HepG2 (cell line): ENCODE measurements at regions of chr5 and their contacts with region 1.

Region 1: GRCh38 chr5:217860-218456 is at the starts of genes CCDC127 and SDHA:
- DNase-seq: peak; percentile 87
- ATAC-seq: peak; percentile 85
- H3K4me3 ChIP-seq: peak within 1 kb of the TSS; percentile 81 to 99 (median 93)
- H3K27ac ChIP-seq: peak within 1 kb of the TSS; percentile 81
- H3K4me1 ChIP-seq: peaks cover 29% of the 10 kb centered on the region
- H3K27me3 ChIP-seq: no peaks in the 10 kb centered on the region
- CTCF ChIP-seq: peak; percentile 69
- EP300 ChIP-seq: no peak
- POLR2A ChIP-seq: peak; percentile 58 to 84; a peak in 3 of 4 replicates
- RAD21 ChIP-seq: peak; percentile 44; the same call in 1 of the 2 replicates
- total RNA-seq, gene CCDC127: 2.8 and 4.3 TPM in 2 replicates
- total RNA-seq, gene SDHA: 192 and 240 TPM in 2 replicates

Region 2: GRCh38 chr5:129820-130219 is 88.1 kb before region 1 on chr5:
- CTCF ChIA-PET with region 1: no interaction called
- POLR2A ChIA-PET with region 1: no interaction called
- in situ Hi-C with region 1: no loop called
- intact Hi-C with region 1: no loop called
- DNase-seq: no peak
- ATAC-seq: no peak
- H3K4me3 ChIP-seq: no peak overlapping the region
- H3K27ac ChIP-seq: no peak overlapping the region
- H3K4me1 ChIP-seq: no peaks in the 10 kb centered on the region
- H3K27me3 ChIP-seq: no peaks in the 10 kb centered on the region; a peak in 1 of 5 replicates
- CTCF ChIP-seq: no peak
- EP300 ChIP-seq: no peak
- POLR2A ChIP-seq: no peak
- RAD21 ChIP-seq: no peak

Region 3: DNA sequence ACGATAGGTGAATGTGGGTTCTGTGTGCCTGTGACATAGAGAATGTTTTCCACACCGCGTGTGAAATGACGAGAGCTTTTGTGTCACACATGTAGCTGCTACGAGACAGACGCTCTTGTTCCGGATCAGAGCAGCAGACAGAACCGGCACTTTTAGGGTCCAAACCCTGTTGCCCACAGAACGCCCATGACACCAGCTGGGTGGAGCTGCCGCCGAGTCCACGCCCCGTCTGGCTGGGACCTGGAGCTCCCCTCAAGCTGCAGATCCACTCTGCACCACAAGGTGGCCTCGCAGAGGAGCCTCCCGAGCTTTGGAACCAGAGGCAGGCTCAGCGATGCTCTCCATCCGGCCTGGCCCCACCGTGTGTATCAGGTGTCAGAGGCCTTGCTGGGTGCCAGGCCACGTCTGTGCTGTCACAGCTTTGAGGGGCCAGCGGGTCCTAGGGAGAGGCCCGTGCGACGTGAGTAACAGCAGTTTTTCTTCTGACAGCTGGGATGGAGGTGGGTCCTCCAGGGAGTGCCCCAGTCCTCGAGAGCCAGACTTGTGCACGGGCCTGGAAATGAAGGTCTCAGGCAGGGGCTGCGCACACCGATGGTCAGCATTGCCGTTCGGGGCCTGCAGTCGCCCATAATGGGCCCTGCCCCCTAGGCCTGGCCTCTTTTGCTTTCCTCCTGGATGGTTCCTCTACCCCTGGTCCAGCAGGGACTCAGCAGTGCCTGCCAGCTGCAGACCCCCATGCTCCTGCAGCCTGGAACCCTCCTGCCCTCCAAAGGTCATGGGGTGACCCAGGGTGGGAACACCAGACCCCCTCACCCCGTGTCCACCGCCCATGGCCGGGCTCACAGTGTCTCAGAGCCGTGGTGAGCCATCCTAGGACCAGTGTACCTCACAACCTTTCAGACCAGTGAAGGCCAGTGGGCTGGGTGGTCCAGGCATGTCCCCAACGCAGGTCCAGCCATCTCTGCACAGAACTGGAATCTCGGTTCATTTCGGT is 29.2 kb before region 1 on chr5:
- CTCF ChIA-PET with region 1: interaction called, 3 read pairs
- POLR2A ChIA-PET with region 1: no interaction called
- in situ Hi-C with region 1: no loop called
- intact Hi-C with region 1: loop called (anchors 2 kb)
- DNase-seq: peak; percentile 77
- ATAC-seq: peak; percentile 93
- H3K4me3 ChIP-seq: no peak overlapping the region; a peak in 1 of 6 replicates
- H3K27ac ChIP-seq: no peak overlapping the region
- H3K4me1 ChIP-seq: peaks cover 23% of the 10 kb centered on the region
- H3K27me3 ChIP-seq: peaks cover 0 to 15% of the 10 kb centered on the region in 2 experiments; a peak in 1 of 5 replicates
- CTCF ChIP-seq: peak; percentile 97
- EP300 ChIP-seq: no peak
- POLR2A ChIP-seq: no peak
- RAD21 ChIP-seq: peak; percentile 85

Region 4: GRCh38 chr5:231661-232060 is 13.7 kb after region 1 on chr5:
- CTCF ChIA-PET with region 1: no interaction called
- POLR2A ChIA-PET with region 1: no interaction called
- in situ Hi-C with region 1: no loop called
- intact Hi-C with region 1: no loop called
- DNase-seq: no peak
- ATAC-seq: no peak
- H3K4me3 ChIP-seq: no peak overlapping the region
- H3K27ac ChIP-seq: no peak overlapping the region
- H3K4me1 ChIP-seq: no peaks in the 10 kb centered on the region
- H3K27me3 ChIP-seq: no peaks in the 10 kb centered on the region
- CTCF ChIP-seq: no peak
- EP300 ChIP-seq: no peak
- POLR2A ChIP-seq: no peak
- RAD21 ChIP-seq: no peak

Region 5: DNA sequence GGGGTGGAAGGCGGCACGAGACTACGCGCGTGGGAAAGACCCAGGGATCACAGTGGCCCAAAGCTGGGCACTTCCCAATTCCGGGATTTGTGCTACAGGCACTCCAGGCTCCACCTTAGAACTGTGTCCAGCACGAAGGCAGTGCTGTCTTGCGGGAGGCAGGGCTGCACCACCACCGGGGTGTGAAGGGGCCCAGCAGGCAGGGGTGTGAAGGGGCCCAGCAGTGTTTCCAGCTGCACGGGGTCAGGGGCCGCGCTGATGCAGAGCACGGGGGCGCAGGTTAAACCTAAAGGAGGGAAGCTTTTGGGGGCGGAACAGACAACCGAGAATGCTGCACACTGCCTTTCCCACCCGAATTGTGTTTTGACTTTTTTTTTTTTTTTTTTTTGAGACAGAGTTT is 52.4 kb after region 1 on chr5:
- CTCF ChIA-PET with region 1: no interaction called
- POLR2A ChIA-PET with region 1: interaction called, 15 read pairs
- in situ Hi-C with region 1: no loop called
- intact Hi-C with region 1: loop called (anchors 5 kb)
- DNase-seq: no peak
- ATAC-seq: no peak
- H3K4me3 ChIP-seq: peak overlapping the region in 1 of 3 experiments; percentile 71; a peak in 1 of 6 replicates
- H3K27ac ChIP-seq: peak overlapping the region; percentile 66
- H3K4me1 ChIP-seq: peaks cover 23% of the 10 kb centered on the region
- H3K27me3 ChIP-seq: no peaks in the 10 kb centered on the region
- CTCF ChIP-seq: no peak
- EP300 ChIP-seq: no peak
- POLR2A ChIP-seq: no peak
- RAD21 ChIP-seq: no peak

Region 6: GRCh38 chr5:442335-443238 is 224.6 kb after region 1 on chr5 and contains the start of gene EXOC3:
- CTCF ChIA-PET with region 1: no interaction called
- POLR2A ChIA-PET with region 1: no interaction called
- in situ Hi-C with region 1: no loop called
- intact Hi-C with region 1: loop called (anchors 5 kb)
- DNase-seq: peak; percentile 52
- ATAC-seq: peak; percentile 92
- H3K4me3 ChIP-seq: peak within 1 kb of the TSS; percentile 95 to 100 (median 99)
- H3K27ac ChIP-seq: peak within 1 kb of the TSS; percentile 58
- H3K4me1 ChIP-seq: peaks cover 19% of the 10 kb centered on the region
- H3K27me3 ChIP-seq: peaks cover 0 to 4% of the 10 kb centered on the region in 2 experiments; a peak in 1 of 5 replicates
- CTCF ChIP-seq: 0 out of 2 replicates have a peak, but pooled peaks have one; percentile 11
- EP300 ChIP-seq: no peak
- POLR2A ChIP-seq: peak; percentile 67 to 90
- RAD21 ChIP-seq: no peak
- total RNA-seq, gene EXOC3: 16.0 and 20.5 TPM in 2 replicates

Region 7: DNA sequence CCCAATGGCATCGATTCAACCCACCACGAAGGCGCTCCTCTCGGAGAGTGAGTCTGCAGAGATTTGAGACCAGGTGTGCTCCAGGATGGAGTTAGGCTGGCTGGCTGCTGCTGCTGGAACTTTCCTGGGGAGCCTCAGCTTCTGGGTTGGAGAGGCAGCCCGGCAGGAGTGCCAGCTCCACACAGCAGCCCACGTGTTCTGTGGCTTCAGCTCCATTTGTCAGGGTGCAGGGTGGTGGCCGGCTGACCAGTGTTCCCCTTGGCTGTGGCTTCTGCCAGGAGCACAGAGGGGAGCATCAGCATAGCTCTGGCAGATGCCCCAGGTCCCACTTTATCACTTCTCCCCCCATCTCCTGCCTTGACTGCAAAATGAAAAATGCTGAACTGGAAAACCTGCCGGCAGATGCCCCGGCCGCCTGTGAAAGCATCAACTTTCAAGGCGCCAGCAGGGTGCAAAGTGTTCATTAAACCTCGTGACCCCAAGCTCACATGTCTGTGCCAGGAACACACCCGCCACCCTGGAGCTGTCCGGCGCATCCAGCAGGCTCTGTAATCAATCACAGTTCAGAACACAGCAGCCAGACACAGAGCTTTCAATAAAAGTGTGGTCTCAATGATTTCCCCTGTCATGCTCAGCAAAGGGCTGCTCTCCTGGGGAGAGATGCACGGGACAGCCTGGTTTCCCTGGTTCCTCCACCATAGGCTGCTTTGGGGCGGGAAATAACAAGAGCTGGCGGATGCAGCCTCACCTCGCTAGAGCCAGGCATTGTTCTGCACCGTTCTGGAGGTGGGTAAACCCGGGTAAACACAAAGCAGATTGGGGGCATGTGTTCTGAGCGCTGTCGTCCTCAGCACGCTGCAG is 728.0 kb after region 1 on chr5:
- CTCF ChIA-PET with region 1: no interaction called
- POLR2A ChIA-PET with region 1: no interaction called
- in situ Hi-C with region 1: no loop called
- intact Hi-C with region 1: loop called (anchors 10 kb)
- DNase-seq: no peak
- ATAC-seq: peak; percentile 52
- H3K4me3 ChIP-seq: no peak overlapping the region
- H3K27ac ChIP-seq: no peak overlapping the region
- H3K4me1 ChIP-seq: no peaks in the 10 kb centered on the region
- H3K27me3 ChIP-seq: peaks cover 20 to 59% of the 10 kb centered on the region in 2 experiments
- CTCF ChIP-seq: no peak
- EP300 ChIP-seq: no peak
- POLR2A ChIP-seq: no peak
- RAD21 ChIP-seq: no peak